Activated naive CD4-positive, alpha-beta T cell treated with anti-CD3 and anti-CD28 coated beads for 36 hours (primary cell): ENCODE measurements at regions of chr7 and their contacts with region 1.

Region 1: GRCh38 chr7:17134786-17135185 is 163.7 kb upstream of the AHR start:
- DNase-seq: peak; percentile 38
- H3K4me3 Mint-ChIP-seq: no peak overlapping the region
- H3K27ac Mint-ChIP-seq: peak overlapping the region; percentile 46
- H3K4me1 Mint-ChIP-seq: peaks cover 54% of the 10 kb centered on the region
- H3K27me3 Mint-ChIP-seq: no peaks in the 10 kb centered on the region

Region 2: GRCh38 chr7:16645593-16646471 is 489.0 kb before region 1 on chr7 and contains the starts of genes ANKMY2 and BZW2:
- CTCF ChIA-PET with region 1: no interaction called
- intact Hi-C with region 1: loop called (anchors 5 kb)
- DNase-seq: peak; percentile 94
- H3K4me3 Mint-ChIP-seq: peak within 1 kb of the TSS; percentile 97
- H3K27ac Mint-ChIP-seq: peak within 1 kb of the TSS; percentile 95
- H3K4me1 Mint-ChIP-seq: peaks cover 53% of the 10 kb centered on the region
- H3K27me3 Mint-ChIP-seq: no peaks in the 10 kb centered on the region
- total RNA-seq, gene ANKMY2: 4.6 to 4.7 TPM
- total RNA-seq, gene BZW2: 118 to 122 TPM

Region 3: GRCh38 chr7:16999541-17000267 is 135.1 kb before region 1 on chr7:
- CTCF ChIA-PET with region 1: no interaction called
- intact Hi-C with region 1: loop called (anchors 1 kb)
- DNase-seq: peak; percentile 18
- H3K4me3 Mint-ChIP-seq: no peak overlapping the region
- H3K27ac Mint-ChIP-seq: no peak overlapping the region
- H3K4me1 Mint-ChIP-seq: peaks cover 7% of the 10 kb centered on the region
- H3K27me3 Mint-ChIP-seq: peaks cover 2% of the 10 kb centered on the region

Region 4: GRCh38 chr7:17041324-17041723 is 93.5 kb before region 1 on chr7:
- CTCF ChIA-PET with region 1: no interaction called
- intact Hi-C with region 1: no loop called
- DNase-seq: no peak
- H3K4me3 Mint-ChIP-seq: no peak overlapping the region
- H3K27ac Mint-ChIP-seq: no peak overlapping the region
- H3K4me1 Mint-ChIP-seq: peaks cover 15% of the 10 kb centered on the region
- H3K27me3 Mint-ChIP-seq: peaks cover 7% of the 10 kb centered on the region

Region 5: DNA sequence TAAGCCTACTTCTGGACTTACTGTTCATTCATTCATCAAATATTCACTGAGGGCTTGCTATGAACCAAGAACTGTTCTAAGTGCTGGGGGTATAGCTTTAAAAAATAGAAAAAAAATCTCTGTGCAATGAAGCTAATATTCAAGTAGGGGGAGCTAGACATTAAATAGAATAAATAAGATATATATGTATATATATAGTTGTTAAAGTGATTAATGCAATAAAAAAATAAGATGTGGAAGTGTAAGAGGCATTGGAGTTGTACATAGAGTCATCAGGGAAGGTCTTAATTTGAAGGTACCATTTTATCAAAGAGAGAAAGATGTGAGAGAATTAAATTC is 71.8 kb before region 1 on chr7:
- CTCF ChIA-PET with region 1: no interaction called
- intact Hi-C with region 1: loop called (anchors 5 kb)
- DNase-seq: no peak
- H3K4me3 Mint-ChIP-seq: no peak overlapping the region
- H3K27ac Mint-ChIP-seq: no peak overlapping the region
- H3K4me1 Mint-ChIP-seq: peaks cover 2% of the 10 kb centered on the region
- H3K27me3 Mint-ChIP-seq: no peaks in the 10 kb centered on the region

Region 6: GRCh38 chr7:17255926-17256325 is 121.1 kb after region 1 on chr7:
- CTCF ChIA-PET with region 1: no interaction called
- intact Hi-C with region 1: loop called (anchors 1 kb)
- DNase-seq: no peak
- H3K4me3 Mint-ChIP-seq: no peak overlapping the region
- H3K27ac Mint-ChIP-seq: no peak overlapping the region
- H3K4me1 Mint-ChIP-seq: peaks cover 6% of the 10 kb centered on the region
- H3K27me3 Mint-ChIP-seq: no peaks in the 10 kb centered on the region

Region 7: GRCh38 chr7:17304926-17305325 is 170.1 kb after region 1 on chr7:
- CTCF ChIA-PET with region 1: no interaction called
- intact Hi-C with region 1: loop called (anchors 1 kb)
- DNase-seq: peak; percentile 41
- H3K4me3 Mint-ChIP-seq: peak overlapping the region; percentile 34
- H3K27ac Mint-ChIP-seq: peak overlapping the region; percentile 79
- H3K4me1 Mint-ChIP-seq: peaks cover 32% of the 10 kb centered on the region
- H3K27me3 Mint-ChIP-seq: no peaks in the 10 kb centered on the region

Region 8: GRCh38 chr7:17444673-17445072 is 309.9 kb after region 1 on chr7:
- CTCF ChIA-PET with region 1: no interaction called
- intact Hi-C with region 1: loop called (anchors 1 kb)
- DNase-seq: no peak
- H3K4me3 Mint-ChIP-seq: no peak overlapping the region
- H3K27ac Mint-ChIP-seq: no peak overlapping the region
- H3K4me1 Mint-ChIP-seq: peaks cover 11% of the 10 kb centered on the region
- H3K27me3 Mint-ChIP-seq: peaks cover 5% of the 10 kb centered on the region

Region 9: DNA sequence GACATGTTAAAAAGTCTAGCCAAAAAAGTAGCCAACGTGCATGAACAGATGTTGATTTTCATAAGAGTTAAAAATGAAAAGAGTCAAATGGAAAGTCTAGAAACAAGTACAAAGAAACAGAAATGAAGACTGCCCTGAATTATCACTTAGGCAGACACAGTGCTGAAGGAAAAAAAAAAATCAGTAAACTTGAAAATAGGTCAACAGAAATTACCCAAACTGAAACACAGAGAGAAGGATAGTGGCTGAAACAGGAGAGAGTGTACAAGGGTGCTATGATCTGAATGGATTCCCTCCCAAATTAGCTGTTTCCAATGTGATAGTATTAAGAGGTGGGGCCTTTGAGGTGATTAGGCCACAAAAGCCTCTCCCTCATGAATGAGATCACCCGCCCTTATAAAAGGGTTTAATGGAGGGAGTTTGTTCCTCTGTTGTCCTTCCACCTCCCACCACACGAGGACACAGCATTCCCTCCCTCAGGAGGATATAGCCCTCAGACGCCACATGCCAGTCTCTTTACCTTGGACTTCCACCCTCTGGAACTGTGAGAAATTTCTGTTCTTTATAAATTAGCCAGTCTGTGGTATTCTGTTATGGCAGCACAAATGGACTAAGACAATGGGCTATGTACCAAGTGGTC is 413.3 kb after region 1 on chr7:
- CTCF ChIA-PET with region 1: no interaction called
- intact Hi-C with region 1: no loop called
- DNase-seq: no peak
- H3K4me3 Mint-ChIP-seq: no peak overlapping the region
- H3K27ac Mint-ChIP-seq: no peak overlapping the region
- H3K4me1 Mint-ChIP-seq: no peaks in the 10 kb centered on the region
- H3K27me3 Mint-ChIP-seq: peaks cover 7% of the 10 kb centered on the region